Caco-2 (cell line): ENCODE measurements at regions of chr2 and their contacts with region 1.

Region 1: GRCh38 chr2:169324581-169325260 is 37.6 kb downstream of the LRP2 start:
- DNase-seq: peak; percentile 66 to 81
- H3K4me3 ChIP-seq: no peak overlapping the region
- H3K4me3 Mint-ChIP-seq: peak overlapping the region; percentile 39
- H3K27ac Mint-ChIP-seq: peak overlapping the region; percentile 68
- H3K4me1 ChIP-seq: peaks cover 36% of the 10 kb centered on the region
- H3K4me1 Mint-ChIP-seq: peaks cover 26% of the 10 kb centered on the region
- H3K27me3 ChIP-seq: no peaks in the 10 kb centered on the region
- H3K27me3 Mint-ChIP-seq: no peaks in the 10 kb centered on the region
- CTCF ChIP-seq: no peak

Region 2: GRCh38 chr2:169303579-169304305 is 21.0 kb before region 1 on chr2:
- CTCF ChIA-PET with region 1: no interaction called
- POLR2A ChIA-PET with region 1: no interaction called
- intact Hi-C with region 1: no loop called
- DNase-seq: no peak
- H3K4me3 ChIP-seq: no peak overlapping the region
- H3K4me3 Mint-ChIP-seq: no peak overlapping the region
- H3K27ac Mint-ChIP-seq: no peak overlapping the region
- H3K4me1 ChIP-seq: no peaks in the 10 kb centered on the region
- H3K4me1 Mint-ChIP-seq: no peaks in the 10 kb centered on the region
- H3K27me3 ChIP-seq: no peaks in the 10 kb centered on the region
- H3K27me3 Mint-ChIP-seq: no peaks in the 10 kb centered on the region
- CTCF ChIP-seq: no peak

Region 3: DNA sequence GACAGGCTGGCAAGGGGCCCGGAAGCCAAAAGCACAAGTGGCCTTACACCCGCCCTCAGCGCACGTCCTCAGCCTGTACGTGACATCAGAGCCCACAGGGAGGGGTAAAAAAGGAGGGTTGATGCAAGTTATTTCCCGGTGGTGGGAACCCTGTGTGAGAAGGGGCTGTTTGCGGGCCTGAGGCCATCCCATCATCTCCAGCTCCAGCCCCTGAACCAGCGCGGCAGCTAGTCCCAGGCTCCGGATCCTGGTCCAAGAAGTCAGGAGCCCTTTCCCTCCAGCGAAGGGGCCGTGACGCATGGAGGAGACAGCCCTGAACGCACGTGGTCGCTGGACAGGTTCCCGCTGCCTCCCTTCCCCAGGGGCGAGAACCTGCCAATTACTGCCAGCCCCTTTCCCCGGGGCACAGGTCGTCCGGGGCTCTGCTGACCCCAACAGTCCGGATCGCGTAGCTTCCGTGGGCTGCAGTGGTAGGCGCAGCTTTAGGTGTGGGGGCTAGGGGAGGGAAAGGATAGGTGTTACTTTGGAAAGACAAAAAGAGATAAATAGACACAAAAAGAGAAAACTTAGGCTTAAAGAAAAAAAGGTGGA is 38.9 kb after region 1 on chr2:
- CTCF ChIA-PET with region 1: no interaction called
- POLR2A ChIA-PET with region 1: no interaction called
- intact Hi-C with region 1: loop called (anchors 1 kb)
- DNase-seq: peak; percentile 78 to 84
- H3K4me3 ChIP-seq: peak overlapping the region; percentile 44
- H3K4me3 Mint-ChIP-seq: peak overlapping the region; percentile 95
- H3K27ac Mint-ChIP-seq: peak overlapping the region; percentile 75
- H3K4me1 ChIP-seq: peaks cover 9% of the 10 kb centered on the region; the same call in 1 of the 2 replicates
- H3K4me1 Mint-ChIP-seq: peaks cover 7% of the 10 kb centered on the region
- H3K27me3 ChIP-seq: no peaks in the 10 kb centered on the region
- H3K27me3 Mint-ChIP-seq: no peaks in the 10 kb centered on the region
- CTCF ChIP-seq: peak in 1 of 2 experiments; percentile 4

Region 4: DNA sequence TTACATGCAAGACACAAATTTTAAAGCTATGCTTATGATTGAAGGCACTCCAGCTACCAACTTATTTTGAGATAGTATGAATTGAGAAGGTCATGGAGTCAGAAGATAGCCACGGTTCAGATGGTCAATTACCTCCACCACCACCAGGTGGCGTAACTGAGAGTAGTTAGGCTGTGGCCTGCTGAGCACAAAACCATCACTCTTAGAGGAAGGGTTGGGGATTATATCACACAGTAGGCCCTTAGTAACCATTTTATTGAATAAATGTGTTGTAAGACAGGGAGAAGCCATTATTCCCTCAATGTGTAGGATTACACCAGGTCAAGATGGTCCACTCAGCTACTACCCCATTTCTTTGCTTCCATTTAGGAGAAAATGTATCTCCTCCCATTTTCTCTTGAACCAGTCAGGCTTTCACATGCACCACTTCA is 203.6 kb after region 1 on chr2:
- CTCF ChIA-PET with region 1: no interaction called
- POLR2A ChIA-PET with region 1: no interaction called
- intact Hi-C with region 1: no loop called
- DNase-seq: peak; percentile 70 to 81
- H3K4me3 ChIP-seq: no peak overlapping the region
- H3K4me3 Mint-ChIP-seq: no peak overlapping the region
- H3K27ac Mint-ChIP-seq: no peak overlapping the region
- H3K4me1 ChIP-seq: no peaks in the 10 kb centered on the region
- H3K4me1 Mint-ChIP-seq: peaks cover 13% of the 10 kb centered on the region
- H3K27me3 ChIP-seq: no peaks in the 10 kb centered on the region
- H3K27me3 Mint-ChIP-seq: no peaks in the 10 kb centered on the region
- CTCF ChIP-seq: peak; percentile 84 to 85